Activated CD4-positive, alpha-beta memory T cell treated with anti-CD3 and anti-CD28 coated beads, Interleukin-2, amount 10 ng/mL, durations not matched to agents 7 days and 5 days (primary cell): ENCODE measurements at regions of chr17 and their contacts with region 1.

Region 1: DNA sequence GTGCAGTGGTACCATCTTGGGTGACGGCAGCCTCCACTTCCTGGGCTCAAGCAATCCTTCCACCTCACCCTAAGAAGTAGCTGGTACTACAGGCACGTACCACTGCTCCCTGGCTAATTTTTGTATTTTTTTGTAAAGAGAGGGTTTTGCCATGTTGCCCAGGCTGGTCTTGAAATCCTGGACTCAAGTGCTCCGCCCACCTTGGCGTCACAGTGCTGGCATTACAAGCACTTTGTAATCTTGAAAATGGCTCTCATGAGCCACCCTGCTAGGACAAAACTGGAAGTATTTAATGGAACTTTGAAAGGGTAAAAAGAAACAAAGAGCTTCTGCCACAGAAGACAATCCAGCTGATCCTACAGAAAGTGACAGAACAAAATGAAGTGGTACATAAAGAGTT is 9.2 kb downstream of the SUMO2 start:
- DNase-seq: no peak
- H3K4me3 Mint-ChIP-seq: no peak overlapping the region
- H3K27ac Mint-ChIP-seq: no peak overlapping the region
- H3K4me1 Mint-ChIP-seq: peaks cover 32% of the 10 kb centered on the region
- H3K27me3 Mint-ChIP-seq: no peaks in the 10 kb centered on the region

Region 2: GRCh38 chr17:75077496-75078283 is 95.8 kb before region 1 on chr17:
- CTCF ChIA-PET with region 1: no interaction called
- POLR2A ChIA-PET with region 1: no interaction called
- DNase-seq: peak; percentile 66
- H3K4me3 Mint-ChIP-seq: peak overlapping the region; percentile 50
- H3K27ac Mint-ChIP-seq: peak overlapping the region; percentile 52
- H3K4me1 Mint-ChIP-seq: peaks cover 29% of the 10 kb centered on the region
- H3K27me3 Mint-ChIP-seq: no peaks in the 10 kb centered on the region

Region 3: DNA sequence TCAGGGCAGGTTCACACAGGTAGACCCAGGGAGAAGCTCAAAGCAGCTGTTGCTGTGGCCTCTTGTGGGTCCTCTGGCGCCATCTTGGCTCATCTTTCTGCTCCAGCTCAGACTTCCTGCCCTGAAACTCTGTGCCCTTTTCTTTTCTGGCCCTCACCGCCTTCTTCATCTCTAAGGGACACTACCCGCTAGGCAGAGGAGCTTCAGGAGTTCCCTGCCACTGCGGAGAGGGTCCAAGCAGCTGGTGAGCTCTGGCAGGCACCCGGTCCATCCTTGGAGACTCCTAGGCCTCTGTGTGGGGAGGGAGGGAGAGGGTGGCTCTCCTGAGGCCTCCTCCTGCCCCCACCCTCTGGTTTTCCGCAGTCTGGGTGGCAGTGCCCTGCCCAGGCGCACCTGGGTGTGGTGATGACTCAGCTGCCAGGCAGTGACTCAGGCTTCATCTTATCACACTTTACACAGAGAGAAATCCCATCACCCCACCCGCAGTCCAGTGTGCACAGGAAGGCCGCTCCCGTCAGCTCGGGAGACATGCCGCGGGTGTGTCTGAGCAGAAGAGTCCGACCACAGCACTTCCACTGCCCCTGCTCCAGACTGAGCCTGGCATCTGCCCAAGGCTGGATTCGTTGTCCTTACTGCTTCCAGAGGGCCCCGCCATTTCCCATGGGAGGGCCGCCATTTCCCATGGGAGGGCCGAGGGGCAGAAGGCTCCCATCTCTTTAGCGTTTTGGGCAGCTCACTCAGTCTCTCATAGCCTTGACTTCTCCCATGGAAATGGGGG is 49.3 kb before region 1 on chr17:
- CTCF ChIA-PET with region 1: interaction called, 4 read pairs
- POLR2A ChIA-PET with region 1: interaction called, 12 read pairs
- DNase-seq: peak; percentile 84
- H3K4me3 Mint-ChIP-seq: peak overlapping the region; percentile 34
- H3K27ac Mint-ChIP-seq: peak overlapping the region; percentile 90
- H3K4me1 Mint-ChIP-seq: peaks cover 56% of the 10 kb centered on the region
- H3K27me3 Mint-ChIP-seq: no peaks in the 10 kb centered on the region

Region 4: DNA sequence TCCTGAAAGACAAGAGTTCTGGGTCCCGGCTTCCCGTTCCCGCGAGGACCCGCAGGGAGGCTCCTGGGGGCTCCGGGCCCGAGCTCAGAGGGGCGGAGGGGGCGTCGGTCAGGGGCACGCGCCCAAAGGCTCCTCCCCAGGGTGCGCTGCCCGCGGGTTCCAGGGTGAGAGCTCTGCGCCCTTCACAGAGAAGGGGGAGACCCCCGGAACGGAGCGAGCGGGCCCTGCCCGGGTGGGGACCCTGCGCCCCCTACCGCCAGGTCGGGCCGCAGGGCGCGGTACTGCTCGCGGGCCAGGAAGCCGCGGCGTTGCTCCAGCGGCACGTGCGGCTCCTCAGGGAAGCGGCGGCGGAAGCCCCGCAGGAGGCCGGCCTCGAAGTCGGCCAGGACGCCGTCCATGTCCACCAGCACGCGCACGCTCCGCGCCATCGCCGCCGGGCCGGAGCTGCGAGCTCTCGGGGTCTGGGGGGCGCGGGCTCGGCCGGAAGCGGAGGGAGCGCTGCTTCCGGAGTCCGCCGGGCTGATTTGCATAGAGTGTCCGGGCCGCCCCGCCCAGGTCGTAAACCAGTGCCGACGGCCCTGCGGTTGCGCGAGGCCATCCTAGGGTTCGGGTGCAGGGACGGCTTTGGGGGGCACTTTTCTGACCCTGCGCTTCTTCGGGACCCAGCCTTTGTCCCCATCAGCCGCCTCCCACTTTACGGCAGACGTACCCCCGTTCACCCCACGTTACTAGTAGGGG is 42.1 kb before region 1 on chr17 and contains the start of gene NT5C:
- CTCF ChIA-PET with region 1: interaction called, 12 read pairs
- POLR2A ChIA-PET with region 1: interaction called, 3 read pairs
- DNase-seq: peak; percentile 75
- H3K4me3 Mint-ChIP-seq: peak within 1 kb of the TSS; percentile 86
- H3K27ac Mint-ChIP-seq: peak within 1 kb of the TSS; percentile 85
- H3K4me1 Mint-ChIP-seq: peaks cover 41% of the 10 kb centered on the region
- H3K27me3 Mint-ChIP-seq: no peaks in the 10 kb centered on the region
- total RNA-seq, gene NT5C: 68.2 to 69.4 TPM

Region 5: DNA sequence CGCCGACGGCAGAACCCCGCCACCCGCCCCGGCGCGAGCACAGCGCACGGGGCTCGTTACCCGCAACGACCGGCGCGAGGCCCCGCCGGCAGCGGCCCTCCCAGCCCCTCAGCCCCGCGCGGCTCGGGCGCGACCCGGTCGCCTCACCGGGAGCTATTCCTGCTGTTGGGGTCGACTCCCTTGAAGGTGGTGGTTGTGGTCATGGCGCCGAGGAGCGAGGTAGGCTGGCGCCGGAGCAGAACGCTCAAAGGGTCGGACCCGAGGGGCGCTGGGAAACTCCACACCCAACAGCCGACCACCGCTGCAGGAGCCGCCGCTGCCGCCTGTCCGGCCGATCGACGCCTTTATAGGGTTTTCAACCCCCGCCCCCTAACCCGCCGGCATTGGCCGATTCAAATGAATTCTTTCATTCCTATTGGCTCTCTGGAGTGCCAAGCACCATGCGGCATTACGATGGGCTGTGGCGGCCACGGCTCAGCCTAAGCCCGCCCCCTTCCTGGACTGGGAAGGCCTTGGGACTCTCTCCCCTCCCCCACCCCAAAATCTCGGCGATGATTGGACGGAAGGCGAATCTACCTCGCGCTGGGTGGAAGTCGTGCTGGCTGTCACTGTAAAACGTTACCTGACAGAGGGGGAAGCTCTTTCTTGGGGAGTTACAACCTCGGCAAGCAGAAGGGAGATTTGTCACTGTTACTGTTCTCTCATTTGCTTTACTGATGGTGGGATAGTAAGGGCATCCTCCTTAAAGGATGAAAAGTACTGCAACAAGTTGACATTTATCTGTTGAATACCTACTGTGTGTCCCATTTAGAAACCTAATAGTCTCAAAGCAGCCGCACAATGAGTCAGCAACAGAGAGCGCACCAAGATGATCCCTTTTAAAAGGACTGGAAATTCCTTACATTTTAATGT is 19.1 kb before region 1 on chr17 and contains the start of gene JPT1:
- CTCF ChIA-PET with region 1: interaction called, 17 read pairs
- POLR2A ChIA-PET with region 1: interaction called, 25 read pairs
- DNase-seq: peak; percentile 99
- H3K4me3 Mint-ChIP-seq: peak within 1 kb of the TSS; percentile 93
- H3K27ac Mint-ChIP-seq: peak within 1 kb of the TSS; percentile 86
- H3K4me1 Mint-ChIP-seq: peaks cover 41% of the 10 kb centered on the region
- H3K27me3 Mint-ChIP-seq: no peaks in the 10 kb centered on the region
- total RNA-seq, gene JPT1: 305 to 329 TPM

Region 6: DNA sequence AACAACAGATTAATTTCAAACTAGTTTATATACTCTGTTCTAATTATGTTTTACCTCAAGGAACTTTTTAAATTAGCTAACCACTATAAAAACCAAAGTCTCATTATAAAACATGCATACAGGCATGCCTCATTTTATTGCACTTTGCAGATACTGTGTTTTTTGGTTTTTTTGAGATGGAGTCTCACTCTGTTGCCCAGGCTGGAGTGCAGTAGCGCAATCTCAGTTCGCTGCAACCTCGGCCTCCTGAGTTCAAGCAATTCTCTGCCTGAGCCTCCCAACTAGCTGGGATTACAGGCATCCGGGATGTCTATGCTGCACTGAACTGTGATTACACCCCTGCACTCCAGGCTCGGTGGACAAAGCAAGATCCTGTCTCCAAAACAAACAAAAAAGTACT is 10.5 kb before region 1 on chr17:
- CTCF ChIA-PET with region 1: interaction called, 17 read pairs
- POLR2A ChIA-PET with region 1: interaction called, 3 read pairs
- DNase-seq: no peak
- H3K4me3 Mint-ChIP-seq: no peak overlapping the region
- H3K27ac Mint-ChIP-seq: no peak overlapping the region
- H3K4me1 Mint-ChIP-seq: peaks cover 2% of the 10 kb centered on the region
- H3K27me3 Mint-ChIP-seq: no peaks in the 10 kb centered on the region

Region 7: GRCh38 chr17:75191584-75191983 is 18.1 kb after region 1 on chr17:
- CTCF ChIA-PET with region 1: interaction called, 9 read pairs
- POLR2A ChIA-PET with region 1: interaction called, 11 read pairs
- DNase-seq: no peak
- H3K4me3 Mint-ChIP-seq: no peak overlapping the region
- H3K27ac Mint-ChIP-seq: no peak overlapping the region
- H3K4me1 Mint-ChIP-seq: peaks cover 13% of the 10 kb centered on the region
- H3K27me3 Mint-ChIP-seq: no peaks in the 10 kb centered on the region

Region 8: DNA sequence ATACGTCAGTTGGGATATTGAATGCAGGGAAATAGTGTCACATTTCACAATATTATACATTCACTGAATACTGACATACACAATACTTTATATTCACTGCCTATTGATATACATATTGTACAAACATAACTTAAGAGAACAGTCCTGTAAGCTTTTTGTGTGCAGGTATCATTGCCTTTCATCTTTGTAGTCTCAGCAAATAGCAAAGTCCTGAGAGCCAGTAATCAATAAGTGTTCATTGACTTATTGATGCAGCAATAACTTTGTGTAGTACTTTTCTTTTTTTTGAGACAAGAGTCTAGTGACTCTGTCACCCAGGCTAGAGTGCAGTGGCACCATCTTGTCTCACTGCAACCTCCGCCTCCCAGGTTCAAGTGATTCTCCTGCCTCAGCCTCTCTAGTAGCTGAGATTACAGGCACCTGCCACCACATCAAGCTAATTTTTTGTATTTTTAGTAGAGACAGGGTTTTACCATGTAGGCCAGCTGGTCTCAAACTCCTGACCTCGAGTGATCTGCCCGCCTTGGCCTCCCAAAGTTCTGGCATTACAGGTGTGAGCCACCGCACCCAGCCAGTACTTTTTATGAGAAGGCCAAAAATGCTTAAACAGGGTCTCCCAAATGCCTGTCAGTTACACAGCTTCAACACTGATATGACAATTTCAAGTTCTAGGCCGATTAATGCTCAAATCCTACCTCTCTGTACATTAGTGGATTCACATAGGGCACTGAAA is 26.5 kb after region 1 on chr17:
- CTCF ChIA-PET with region 1: interaction called, 52 read pairs
- POLR2A ChIA-PET with region 1: interaction called, 6 read pairs
- DNase-seq: no peak
- H3K4me3 Mint-ChIP-seq: no peak overlapping the region
- H3K27ac Mint-ChIP-seq: no peak overlapping the region
- H3K4me1 Mint-ChIP-seq: peaks cover 13% of the 10 kb centered on the region
- H3K27me3 Mint-ChIP-seq: peaks cover 1% of the 10 kb centered on the region

Region 9: GRCh38 chr17:75309025-75309772 is 135.7 kb after region 1 on chr17:
- CTCF ChIA-PET with region 1: no interaction called
- POLR2A ChIA-PET with region 1: no interaction called
- DNase-seq: no peak
- H3K4me3 Mint-ChIP-seq: no peak overlapping the region
- H3K27ac Mint-ChIP-seq: no peak overlapping the region
- H3K4me1 Mint-ChIP-seq: peaks cover 17% of the 10 kb centered on the region
- H3K27me3 Mint-ChIP-seq: no peaks in the 10 kb centered on the region